Heart right ventricle (tissue), 16 donors: ENCODE measurements at regions of chr2 and their contacts with region 1.

Region 1: DNA sequence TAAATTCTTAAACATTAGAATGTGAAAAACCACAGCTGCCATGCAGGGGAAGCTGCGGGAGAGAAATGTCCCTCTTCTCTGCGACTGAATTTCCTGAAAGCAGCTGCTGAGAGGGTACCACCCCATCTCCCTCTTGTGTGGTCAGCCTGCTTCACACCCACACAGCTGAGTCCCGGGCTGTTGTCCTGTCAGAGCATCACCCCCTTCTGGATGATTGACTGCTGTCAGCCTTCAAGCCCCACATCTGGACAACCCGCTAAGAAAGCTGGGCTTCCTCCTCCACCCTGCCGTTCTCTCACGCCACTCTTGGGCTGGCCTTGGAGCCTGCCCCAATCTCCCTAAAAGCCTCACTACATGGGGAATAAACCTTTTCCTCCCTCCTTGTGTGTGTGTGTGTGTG is 26.0 kb downstream of the SH3YL1 start:
- DNase-seq: no peak
- ATAC-seq: no peak
- H3K4me3 ChIP-seq: no peak overlapping the region
- H3K27ac ChIP-seq: no peak overlapping the region
- H3K4me1 ChIP-seq: no peaks in the 10 kb centered on the region
- H3K27me3 ChIP-seq: no peaks in the 10 kb centered on the region
- CTCF ChIP-seq: no peak

Region 2: GRCh38 chr2:296354-296753 is 58.5 kb after region 1 on chr2:
- intact Hi-C with region 1: loop called in 2 of 10 experiments (anchors 5 to 10 kb)
- DNase-seq: no peak
- ATAC-seq: no peak
- H3K4me3 ChIP-seq: no peak overlapping the region
- H3K27ac ChIP-seq: no peak overlapping the region
- H3K4me1 ChIP-seq: no peaks in the 10 kb centered on the region
- H3K27me3 ChIP-seq: peaks cover 0 to 42% (median 16%) of the 10 kb centered on the region in 7 donors
- CTCF ChIP-seq: no peak

Region 3: GRCh38 chr2:401019-401679 is 163.3 kb after region 1 on chr2:
- intact Hi-C with region 1: no loop called
- DNase-seq: no peak
- ATAC-seq: no peak
- H3K4me3 ChIP-seq: no peak overlapping the region
- H3K27ac ChIP-seq: no peak overlapping the region
- H3K4me1 ChIP-seq: no peaks in the 10 kb centered on the region
- H3K27me3 ChIP-seq: peaks cover 0 to 9% (median 0%) of the 10 kb centered on the region in 7 donors
- CTCF ChIP-seq: no peak